PC-9 (cell line): ENCODE measurements at regions of chr17 and their contacts with region 1.

Region 1: GRCh38 chr17:47698749-47699535 is 5.0 kb downstream of the TBKBP1 start:
- DNase-seq: peak; percentile 42 to 61
- H3K4me3 ChIP-seq: no peak overlapping the region
- H3K27ac ChIP-seq: no peak overlapping the region
- H3K4me1 ChIP-seq: no peaks in the 10 kb centered on the region
- H3K27me3 ChIP-seq: no peaks in the 10 kb centered on the region
- CTCF ChIP-seq: peak; percentile 100

Region 2: DNA sequence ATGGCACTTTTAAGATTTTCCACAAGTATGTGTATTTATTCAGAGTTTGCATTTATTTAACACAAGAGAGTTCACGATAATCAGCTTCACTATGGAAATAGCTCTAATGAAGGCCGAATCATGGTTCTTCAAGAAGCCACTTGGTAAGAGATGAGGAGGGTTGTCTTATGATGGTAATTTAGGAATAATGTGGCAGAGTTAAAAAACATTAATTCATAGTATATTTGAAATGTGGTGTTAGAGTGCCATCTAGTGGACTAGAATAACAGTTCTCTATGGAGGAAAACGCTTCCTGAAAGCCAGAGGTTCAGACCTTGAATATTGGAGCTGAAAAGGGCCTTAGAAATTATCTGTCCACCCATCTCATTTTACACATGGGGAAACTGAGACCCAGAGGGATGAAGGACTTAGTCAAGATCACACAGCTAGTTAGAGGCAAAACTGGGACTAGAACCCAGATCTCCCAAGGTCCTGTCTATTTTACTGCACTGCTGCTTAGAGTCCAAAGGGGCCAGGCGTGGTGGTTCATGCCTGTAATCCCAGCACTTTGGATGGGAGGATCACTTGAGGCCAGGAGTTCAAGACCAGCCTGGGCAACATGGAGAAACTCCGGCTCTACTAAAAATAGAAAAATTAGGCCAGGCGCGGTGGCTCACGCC is 83.0 kb before region 1 on chr17:
- CTCF ChIA-PET with region 1: no interaction called
- POLR2A ChIA-PET with region 1: no interaction called
- intact Hi-C with region 1: no loop called
- DNase-seq: peak in 1 of 2 experiments; percentile 49
- H3K4me3 ChIP-seq: no peak overlapping the region
- H3K27ac ChIP-seq: 0 out of 2 replicates have a peak overlapping the region, but pooled peaks have one; percentile 7
- H3K4me1 ChIP-seq: peaks cover 30% of the 10 kb centered on the region
- H3K27me3 ChIP-seq: no peaks in the 10 kb centered on the region
- CTCF ChIP-seq: peak; percentile 93

Region 3: DNA sequence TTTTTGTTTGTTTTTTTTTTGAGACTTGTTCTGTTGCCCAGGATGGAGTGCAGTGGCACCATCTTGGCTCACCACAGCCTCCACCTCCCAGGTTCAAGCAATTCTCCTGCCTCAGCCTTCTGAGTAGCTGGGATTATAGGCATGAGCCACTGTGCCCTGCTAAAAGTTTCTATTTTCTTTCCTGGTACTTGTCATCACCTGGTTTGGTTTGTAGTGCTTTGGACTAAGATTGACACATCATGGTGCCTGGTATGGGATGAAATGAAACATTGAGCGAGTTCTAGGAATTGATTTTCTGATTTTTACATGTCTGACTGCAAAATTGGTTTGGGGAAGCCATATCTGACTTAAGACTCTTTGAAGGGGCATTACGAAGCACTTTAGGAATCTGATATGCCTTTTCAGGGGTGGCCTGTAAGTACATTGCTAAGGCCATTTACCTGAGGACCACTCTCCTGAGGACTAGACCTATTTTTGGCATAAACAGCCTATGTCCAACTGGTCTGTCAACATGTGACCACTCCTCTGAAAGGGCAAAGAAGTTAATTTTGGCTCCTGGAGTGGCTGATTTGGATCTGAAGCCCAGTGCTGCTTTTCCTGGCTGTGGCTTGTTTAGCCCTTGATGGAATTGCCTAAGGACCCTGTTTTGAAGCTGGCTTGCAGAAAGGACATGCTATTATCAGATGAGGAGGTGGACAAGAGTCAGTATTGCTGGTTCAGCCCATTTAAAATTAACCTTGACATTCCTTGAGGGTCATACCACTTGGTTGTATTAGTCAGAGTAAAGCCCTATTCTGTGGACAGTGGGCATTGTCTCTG is 23.4 kb before region 1 on chr17:
- CTCF ChIA-PET with region 1: no interaction called
- POLR2A ChIA-PET with region 1: no interaction called
- intact Hi-C with region 1: no loop called
- DNase-seq: no peak
- H3K4me3 ChIP-seq: no peak overlapping the region
- H3K27ac ChIP-seq: no peak overlapping the region
- H3K4me1 ChIP-seq: no peaks in the 10 kb centered on the region
- H3K27me3 ChIP-seq: no peaks in the 10 kb centered on the region
- CTCF ChIP-seq: no peak

Region 4: DNA sequence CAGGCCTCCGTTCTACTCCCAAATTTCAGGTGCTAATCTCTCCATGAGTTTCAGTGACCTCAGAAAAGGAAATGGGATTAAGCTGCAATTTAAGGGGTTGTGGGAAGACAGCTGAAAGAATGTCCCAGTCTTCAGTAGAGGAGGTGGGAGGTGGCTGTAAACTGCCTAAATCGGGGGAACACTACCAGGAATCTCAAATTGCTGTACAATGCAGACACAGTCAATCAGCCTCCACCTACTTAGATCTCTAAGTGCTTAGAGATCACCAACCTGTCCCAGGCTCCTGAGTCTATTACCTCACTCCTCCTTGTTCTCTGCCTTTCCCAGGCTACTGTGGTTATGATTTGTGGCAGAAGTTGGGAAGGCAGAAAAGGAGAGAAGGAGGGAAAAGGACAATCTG is 25.8 kb after region 1 on chr17:
- CTCF ChIA-PET with region 1: interaction called, 11 read pairs
- POLR2A ChIA-PET with region 1: no interaction called
- intact Hi-C with region 1: no loop called
- DNase-seq: no peak
- H3K4me3 ChIP-seq: no peak overlapping the region
- H3K27ac ChIP-seq: no peak overlapping the region
- H3K4me1 ChIP-seq: peaks cover 25% of the 10 kb centered on the region
- H3K27me3 ChIP-seq: peaks cover 13% of the 10 kb centered on the region
- CTCF ChIP-seq: no peak

Region 5: GRCh38 chr17:47742319-47743181 is 43.6 kb after region 1 on chr17:
- CTCF ChIA-PET with region 1: interaction called, 5 read pairs
- POLR2A ChIA-PET with region 1: no interaction called
- intact Hi-C with region 1: loop called (anchors 2 kb)
- DNase-seq: no peak
- H3K4me3 ChIP-seq: no peak overlapping the region
- H3K27ac ChIP-seq: no peak overlapping the region
- H3K4me1 ChIP-seq: no peaks in the 10 kb centered on the region
- H3K27me3 ChIP-seq: peaks cover 55% of the 10 kb centered on the region
- CTCF ChIP-seq: peak; percentile 64

Region 6: GRCh38 chr17:47789611-47790561 is 90.9 kb after region 1 on chr17:
- CTCF ChIA-PET with region 1: no interaction called
- POLR2A ChIA-PET with region 1: no interaction called
- intact Hi-C with region 1: loop called (anchors 1 kb)
- DNase-seq: peak; percentile 41 to 52
- H3K4me3 ChIP-seq: peak overlapping the region; percentile 30; the same call in 1 of the 2 replicates
- H3K27ac ChIP-seq: no peak overlapping the region
- H3K4me1 ChIP-seq: no peaks in the 10 kb centered on the region
- H3K27me3 ChIP-seq: peaks cover 96% of the 10 kb centered on the region
- CTCF ChIP-seq: peak; percentile 55

Region 7: DNA sequence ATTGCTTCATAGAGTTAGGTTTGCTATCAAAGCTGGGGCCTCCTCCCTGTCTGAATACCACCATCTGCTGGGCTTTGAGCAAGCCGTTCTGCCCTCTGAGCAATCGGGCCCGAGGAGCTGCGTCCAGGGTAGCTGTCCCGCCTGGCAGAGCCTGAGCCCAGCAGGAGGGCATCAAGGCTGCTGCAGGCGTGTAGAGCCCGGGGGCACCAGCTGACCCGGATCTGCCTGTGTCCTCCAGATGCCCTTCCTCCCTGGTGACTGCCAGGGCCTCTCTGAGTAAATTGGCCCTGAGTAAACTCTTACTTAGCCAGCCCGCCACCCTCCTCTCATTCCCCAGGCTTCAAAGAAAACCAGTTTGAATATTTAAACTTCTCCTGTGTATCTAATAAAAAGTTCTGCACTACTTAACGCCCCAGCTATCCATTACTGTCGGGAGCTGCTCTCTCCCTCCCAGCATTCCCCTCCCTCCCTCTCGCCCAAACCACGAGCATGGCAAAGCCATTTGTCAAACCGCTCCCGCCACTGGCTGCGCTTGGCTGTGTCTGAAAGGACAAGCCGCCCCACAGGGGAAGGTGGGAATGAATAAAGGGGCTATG is 288.4 kb after region 1 on chr17:
- CTCF ChIA-PET with region 1: no interaction called
- POLR2A ChIA-PET with region 1: no interaction called
- intact Hi-C with region 1: no loop called
- DNase-seq: no peak
- H3K4me3 ChIP-seq: no peak overlapping the region
- H3K27ac ChIP-seq: no peak overlapping the region
- H3K4me1 ChIP-seq: no peaks in the 10 kb centered on the region
- H3K27me3 ChIP-seq: no peaks in the 10 kb centered on the region
- CTCF ChIP-seq: no peak